Ascending aorta (tissue), 2 donors: ENCODE measurements at regions of chr3 and their contacts with region 1.

Region 1: GRCh38 chr3:197186887-197187588 is 111.4 kb downstream of the DLG1 start:
- DNase-seq: no peak
- H3K4me3 ChIP-seq: no peak overlapping the region
- H3K27ac ChIP-seq: no peak overlapping the region
- H3K4me1 ChIP-seq: no peaks in the 10 kb centered on the region
- H3K27me3 ChIP-seq: no peaks in the 10 kb centered on the region
- CTCF ChIP-seq: peak; percentile 41 to 72 (median 62)

Region 2: DNA sequence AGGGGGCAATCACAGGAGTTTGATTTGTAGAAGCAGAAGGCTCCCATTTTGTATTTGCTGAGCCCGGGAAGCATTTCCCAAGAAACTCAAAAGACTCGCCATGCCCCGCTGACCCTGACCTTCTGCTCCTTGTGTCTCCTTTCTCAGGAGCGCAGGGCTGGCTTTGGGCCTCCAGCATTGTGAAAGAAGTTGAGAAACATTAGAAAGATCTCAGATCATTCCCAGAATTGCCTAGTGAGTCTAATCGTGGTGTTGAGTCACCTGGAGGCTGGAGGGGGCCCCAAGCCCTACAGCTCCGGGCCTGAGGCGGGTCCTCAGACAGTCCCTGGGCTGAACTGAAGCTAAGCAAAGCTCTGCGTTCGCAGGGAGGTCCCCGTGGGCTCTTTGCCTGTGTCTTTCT is 207.5 kb before region 1 on chr3:
- intact Hi-C with region 1: loop called (anchors 2 kb)
- DNase-seq: no peak
- H3K4me3 ChIP-seq: no peak overlapping the region
- H3K27ac ChIP-seq: no peak overlapping the region
- H3K4me1 ChIP-seq: no peaks in the 10 kb centered on the region
- H3K27me3 ChIP-seq: no peaks in the 10 kb centered on the region
- CTCF ChIP-seq: no peak

Region 3: GRCh38 chr3:197082871-197083270 is 104.2 kb before region 1 on chr3:
- intact Hi-C with region 1: no loop called
- DNase-seq: no peak
- H3K4me3 ChIP-seq: no peak overlapping the region
- H3K27ac ChIP-seq: no peak overlapping the region
- H3K4me1 ChIP-seq: no peaks in the 10 kb centered on the region
- H3K27me3 ChIP-seq: no peaks in the 10 kb centered on the region
- CTCF ChIP-seq: no peak